Endothelial cell of umbilical vein (primary cell): ENCODE measurements at regions of chr17 and their contacts with region 1.

Region 1: GRCh38 chr17:1716076-1716995 is 6.2 kb upstream of the TLCD2 start:
- DNase-seq: peak; percentile 100
- H3K4me3 ChIP-seq: peak overlapping the region; percentile 72 to 97 (median 76)
- H3K27ac ChIP-seq: peak overlapping the region; percentile 96
- H3K4me1 ChIP-seq: peaks cover 34% of the 10 kb centered on the region
- H3K27me3 ChIP-seq: no peaks in the 10 kb centered on the region
- CTCF ChIP-seq: no peak
- POLR2A ChIP-seq: peak; percentile 99

Region 2: GRCh38 chr17:1474402-1475189 is 241.7 kb before region 1 on chr17:
- CTCF ChIA-PET with region 1: no interaction called
- POLR2A ChIA-PET with region 1: no interaction called
- dilution Hi-C with region 1: no loop called
- intact Hi-C with region 1: no loop called
- DNase-seq: no peak
- H3K4me3 ChIP-seq: no peak overlapping the region
- H3K27ac ChIP-seq: no peak overlapping the region
- H3K4me1 ChIP-seq: no peaks in the 10 kb centered on the region
- H3K27me3 ChIP-seq: no peaks in the 10 kb centered on the region
- CTCF ChIP-seq: no peak
- POLR2A ChIP-seq: no peak

Region 3: GRCh38 chr17:1638171-1638952 is 78.0 kb before region 1 on chr17:
- CTCF ChIA-PET with region 1: no interaction called
- POLR2A ChIA-PET with region 1: no interaction called
- dilution Hi-C with region 1: no loop called
- intact Hi-C with region 1: no loop called
- DNase-seq: no peak
- H3K4me3 ChIP-seq: no peak overlapping the region
- H3K27ac ChIP-seq: no peak overlapping the region
- H3K4me1 ChIP-seq: no peaks in the 10 kb centered on the region
- H3K27me3 ChIP-seq: no peaks in the 10 kb centered on the region
- CTCF ChIP-seq: no peak
- POLR2A ChIP-seq: no peak

Region 4: GRCh38 chr17:1648963-1649843 is 67.1 kb before region 1 on chr17:
- CTCF ChIA-PET with region 1: interaction called, 12 read pairs
- POLR2A ChIA-PET with region 1: interaction called, 10 read pairs
- dilution Hi-C with region 1: no loop called
- intact Hi-C with region 1: loop called (anchors 1 kb)
- DNase-seq: peak; percentile 94
- H3K4me3 ChIP-seq: peak overlapping the region; percentile 10 to 52 (median 39)
- H3K27ac ChIP-seq: peak overlapping the region; percentile 54
- H3K4me1 ChIP-seq: peaks cover 40% of the 10 kb centered on the region
- H3K27me3 ChIP-seq: no peaks in the 10 kb centered on the region
- CTCF ChIP-seq: peak; percentile 63 to 94
- POLR2A ChIP-seq: peak; percentile 46

Region 5: DNA sequence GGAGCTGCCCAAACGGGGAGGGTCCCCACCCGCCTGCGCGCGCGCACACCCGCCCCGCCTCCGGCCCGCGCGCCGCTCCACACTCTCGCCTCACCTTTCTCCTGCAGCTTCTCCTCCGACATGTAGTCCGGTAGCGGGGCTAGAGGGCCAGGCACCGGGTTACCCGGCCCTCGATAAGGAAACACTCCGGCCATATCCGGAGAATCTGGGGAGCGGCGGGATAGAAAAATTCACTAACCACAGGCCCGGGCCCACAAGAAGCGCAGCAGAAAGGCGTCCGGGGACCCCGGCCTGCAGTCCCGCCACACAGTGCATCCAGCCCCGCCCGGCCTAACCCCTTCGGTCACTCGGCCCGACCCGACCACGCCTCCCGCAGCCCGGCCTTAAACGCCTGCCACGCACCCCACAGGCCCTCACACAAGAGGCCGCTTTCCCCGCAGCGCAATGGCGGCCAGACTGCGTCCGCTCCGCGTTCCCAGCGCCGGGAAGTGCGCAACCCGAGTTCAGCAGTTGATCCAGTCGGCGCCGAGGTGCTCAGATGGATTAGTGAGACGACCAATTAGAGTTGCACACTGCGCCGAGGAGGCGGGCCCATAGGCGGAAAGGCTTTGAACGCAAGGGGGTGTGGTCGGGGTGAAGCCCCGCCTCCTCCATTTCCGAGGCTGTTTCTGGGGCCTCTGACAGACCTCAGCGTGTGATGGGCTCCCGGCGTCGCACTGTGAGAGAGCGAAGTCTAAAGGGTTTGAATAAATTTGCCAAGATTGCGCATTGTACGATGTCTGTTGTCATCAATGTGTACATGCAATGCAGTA is 31.8 kb before region 1 on chr17 and contains the start of gene PRPF8:
- CTCF ChIA-PET with region 1: interaction called, 5 read pairs
- POLR2A ChIA-PET with region 1: interaction called, 11 read pairs
- dilution Hi-C with region 1: no loop called
- intact Hi-C with region 1: loop called (anchors 1 kb)
- DNase-seq: peak; percentile 99
- H3K4me3 ChIP-seq: peak within 1 kb of the TSS; percentile 71 to 95 (median 77)
- H3K27ac ChIP-seq: peak within 1 kb of the TSS; percentile 54
- H3K4me1 ChIP-seq: peaks cover 8% of the 10 kb centered on the region
- H3K27me3 ChIP-seq: no peaks in the 10 kb centered on the region
- CTCF ChIP-seq: no peak
- POLR2A ChIP-seq: peak; percentile 88
- total RNA-seq, gene PRPF8: 282 and 301 TPM in 2 replicates

Region 6: GRCh38 chr17:1829592-1830257 is 113.4 kb after region 1 on chr17 and contains the starts of genes RPA1 and SMYD4:
- CTCF ChIA-PET with region 1: interaction called, 17 read pairs
- POLR2A ChIA-PET with region 1: interaction called, 5 read pairs
- dilution Hi-C with region 1: no loop called
- intact Hi-C with region 1: loop called (anchors 2 kb)
- DNase-seq: peak; percentile 94
- H3K4me3 ChIP-seq: peak within 1 kb of the TSS; percentile 84 to 96 (median 86)
- H3K27ac ChIP-seq: peak within 1 kb of the TSS; percentile 23
- H3K4me1 ChIP-seq: peaks cover 11% of the 10 kb centered on the region
- H3K27me3 ChIP-seq: no peaks in the 10 kb centered on the region
- CTCF ChIP-seq: no peak
- POLR2A ChIP-seq: peak; percentile 78
- total RNA-seq, gene RPA1: 123 and 137 TPM in 2 replicates
- total RNA-seq, gene SMYD4: 11.5 and 14.6 TPM in 2 replicates

Region 7: DNA sequence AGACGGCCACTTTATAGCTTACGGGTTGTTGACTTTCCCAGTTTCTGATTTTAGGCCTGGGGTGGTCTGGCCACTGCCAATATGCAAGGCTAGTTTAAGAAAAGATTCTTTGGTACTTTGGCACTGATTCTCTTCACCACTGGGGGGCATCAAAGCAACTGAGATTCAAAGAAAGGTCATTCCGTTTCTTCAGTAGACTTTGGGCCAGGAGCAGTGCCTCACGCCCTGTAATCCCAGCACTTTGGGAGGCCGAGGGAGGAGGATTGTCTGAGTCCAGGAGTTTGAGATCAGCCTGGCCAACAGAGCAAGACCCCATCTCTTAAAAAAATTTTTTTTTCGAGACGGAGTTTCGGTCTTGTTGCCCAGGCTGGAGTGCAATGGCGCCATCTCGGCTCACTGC is 166.5 kb after region 1 on chr17:
- CTCF ChIA-PET with region 1: no interaction called
- POLR2A ChIA-PET with region 1: no interaction called
- dilution Hi-C with region 1: no loop called
- intact Hi-C with region 1: no loop called
- DNase-seq: peak; percentile 45
- H3K4me3 ChIP-seq: no peak overlapping the region
- H3K27ac ChIP-seq: no peak overlapping the region
- H3K4me1 ChIP-seq: no peaks in the 10 kb centered on the region
- H3K27me3 ChIP-seq: no peaks in the 10 kb centered on the region
- CTCF ChIP-seq: peak; percentile 33 to 53
- POLR2A ChIP-seq: no peak

Region 8: GRCh38 chr17:2029911-2030778 is 313.8 kb after region 1 on chr17 and contains the start of gene DPH1:
- CTCF ChIA-PET with region 1: interaction called, 4 read pairs
- POLR2A ChIA-PET with region 1: no interaction called
- dilution Hi-C with region 1: no loop called
- intact Hi-C with region 1: loop called (anchors 5 kb)
- DNase-seq: peak; percentile 88
- H3K4me3 ChIP-seq: peak within 1 kb of the TSS; percentile 81 to 97 (median 87)
- H3K27ac ChIP-seq: peak within 1 kb of the TSS; percentile 16
- H3K4me1 ChIP-seq: peaks cover 7% of the 10 kb centered on the region
- H3K27me3 ChIP-seq: peaks cover 15 to 16% of the 10 kb centered on the region in 2 experiments
- CTCF ChIP-seq: no peak
- POLR2A ChIP-seq: peak; percentile 69
- total RNA-seq, gene DPH1: 37.8 and 38.5 TPM in 2 replicates

Region 9: GRCh38 chr17:2392252-2393173 is 676.2 kb after region 1 on chr17:
- CTCF ChIA-PET with region 1: no interaction called
- POLR2A ChIA-PET with region 1: no interaction called
- dilution Hi-C with region 1: no loop called
- intact Hi-C with region 1: loop called (anchors 5 kb)
- DNase-seq: peak; percentile 95
- H3K4me3 ChIP-seq: peak overlapping the region; percentile 3 to 76 (median 52)
- H3K27ac ChIP-seq: peak overlapping the region; percentile 92
- H3K4me1 ChIP-seq: peaks cover 34% of the 10 kb centered on the region
- H3K27me3 ChIP-seq: no peaks in the 10 kb centered on the region
- CTCF ChIP-seq: no peak
- POLR2A ChIP-seq: peak; percentile 63